HCT116 (cell line): ENCODE measurements at regions of chr6 and their contacts with region 1.

Region 1: GRCh38 chr6:25717866-25718740 is 36.4 kb upstream of the SLC17A4 start:
- DNase-seq: peak; percentile 6
- ATAC-seq: peak; percentile 48; the same call in 1 of the 2 replicates
- H3K4me3 ChIP-seq: no peak overlapping the region
- H3K27ac ChIP-seq: no peak overlapping the region
- H3K4me1 ChIP-seq: 0 out of 4 replicates have a peak, but pooled peaks cover 0 to 5% of the 10 kb centered on the region in 2 experiments
- H3K27me3 ChIP-seq: no peaks in the 10 kb centered on the region
- CTCF ChIP-seq: peak; percentile 47 to 67 (median 53); a peak in 5 of 6 replicates
- POLR2A ChIP-seq: no peak
- RAD21 ChIP-seq: peak; percentile 64

Region 2: GRCh38 chr6:24743265-24743943 is 974.7 kb before region 1 on chr6:
- CTCF ChIA-PET with region 1: no interaction called
- POLR2A ChIA-PET with region 1: no interaction called
- RAD21 ChIA-PET with region 1: no interaction called
- intact Hi-C with region 1: no loop called
- DNase-seq: peak; percentile 76
- ATAC-seq: peak; percentile 88
- H3K4me3 ChIP-seq: peak overlapping the region; percentile 6 to 36; a peak in 3 of 4 replicates
- H3K27ac ChIP-seq: peak overlapping the region; percentile 59
- H3K4me1 ChIP-seq: peaks cover 3 to 22% of the 10 kb centered on the region in 2 experiments; a peak in 3 of 4 replicates
- H3K27me3 ChIP-seq: no peaks in the 10 kb centered on the region
- CTCF ChIP-seq: no peak
- POLR2A ChIP-seq: no peak
- RAD21 ChIP-seq: no peak

Region 3: DNA sequence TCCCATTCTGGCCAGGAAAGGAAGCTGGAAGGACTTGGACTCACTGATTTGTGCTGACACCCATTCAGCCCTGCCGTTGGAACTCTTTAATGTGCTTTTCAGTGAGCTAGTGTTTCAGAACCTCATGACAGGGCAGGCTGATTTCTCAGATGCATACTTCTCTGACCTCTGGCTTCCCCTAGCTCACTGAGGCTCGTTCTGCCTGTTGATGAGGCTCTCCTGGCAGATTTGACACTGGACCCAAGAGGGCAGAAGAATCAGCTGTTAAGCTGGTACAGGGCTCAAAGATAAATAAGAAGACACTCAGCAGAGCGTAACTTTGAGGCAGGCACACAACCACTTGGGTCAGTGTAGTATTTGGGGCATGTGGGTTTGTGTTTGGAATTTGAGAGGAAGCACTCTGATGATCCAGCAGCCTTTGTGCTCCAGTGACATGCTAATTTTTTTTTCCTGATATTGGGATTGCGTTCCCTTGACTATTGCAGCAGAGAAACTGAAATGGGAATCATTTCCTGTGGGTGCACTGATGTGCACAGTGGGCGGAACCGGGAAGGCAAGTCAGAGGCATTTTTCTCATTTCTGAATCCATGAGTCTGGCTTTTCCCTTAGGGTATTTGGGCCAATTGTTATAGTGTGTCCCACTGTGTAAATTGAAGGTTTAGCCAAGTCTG is 358.8 kb before region 1 on chr6:
- CTCF ChIA-PET with region 1: no interaction called
- POLR2A ChIA-PET with region 1: no interaction called
- RAD21 ChIA-PET with region 1: no interaction called
- intact Hi-C with region 1: no loop called
- DNase-seq: no peak
- ATAC-seq: peak; percentile 42; the same call in 1 of the 2 replicates
- H3K4me3 ChIP-seq: no peak overlapping the region
- H3K27ac ChIP-seq: no peak overlapping the region; the same call in 1 of the 2 replicates
- H3K4me1 ChIP-seq: peaks cover 15 to 21% of the 10 kb centered on the region in 2 experiments; a peak in 3 of 4 replicates
- H3K27me3 ChIP-seq: no peaks in the 10 kb centered on the region
- CTCF ChIP-seq: no peak
- POLR2A ChIP-seq: no peak
- RAD21 ChIP-seq: no peak

Region 4: DNA sequence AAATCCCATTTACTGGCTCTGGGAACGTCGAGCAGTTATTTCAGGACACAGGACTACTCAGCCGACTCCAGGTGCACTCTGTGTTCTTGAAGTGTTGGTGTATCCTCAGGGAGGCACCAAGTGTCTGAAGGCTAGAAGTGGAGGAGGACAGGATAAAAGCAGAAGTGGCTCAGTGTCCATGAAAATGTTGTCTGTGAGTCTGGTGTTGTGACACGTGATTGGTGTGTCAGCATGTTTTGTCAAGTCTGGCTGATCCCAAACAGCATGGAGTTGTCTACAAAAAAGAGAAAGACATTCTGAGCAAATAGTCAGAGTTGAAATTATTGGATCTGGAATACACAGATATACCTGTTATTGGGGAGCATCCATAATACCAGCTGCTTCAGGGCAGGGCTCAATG is 35.8 kb before region 1 on chr6:
- CTCF ChIA-PET with region 1: no interaction called
- POLR2A ChIA-PET with region 1: no interaction called
- RAD21 ChIA-PET with region 1: no interaction called
- intact Hi-C with region 1: no loop called
- DNase-seq: no peak
- ATAC-seq: no peak
- H3K4me3 ChIP-seq: no peak overlapping the region
- H3K27ac ChIP-seq: no peak overlapping the region
- H3K4me1 ChIP-seq: no peaks in the 10 kb centered on the region
- H3K27me3 ChIP-seq: no peaks in the 10 kb centered on the region
- CTCF ChIP-seq: no peak
- POLR2A ChIP-seq: no peak
- RAD21 ChIP-seq: no peak

Region 5: DNA sequence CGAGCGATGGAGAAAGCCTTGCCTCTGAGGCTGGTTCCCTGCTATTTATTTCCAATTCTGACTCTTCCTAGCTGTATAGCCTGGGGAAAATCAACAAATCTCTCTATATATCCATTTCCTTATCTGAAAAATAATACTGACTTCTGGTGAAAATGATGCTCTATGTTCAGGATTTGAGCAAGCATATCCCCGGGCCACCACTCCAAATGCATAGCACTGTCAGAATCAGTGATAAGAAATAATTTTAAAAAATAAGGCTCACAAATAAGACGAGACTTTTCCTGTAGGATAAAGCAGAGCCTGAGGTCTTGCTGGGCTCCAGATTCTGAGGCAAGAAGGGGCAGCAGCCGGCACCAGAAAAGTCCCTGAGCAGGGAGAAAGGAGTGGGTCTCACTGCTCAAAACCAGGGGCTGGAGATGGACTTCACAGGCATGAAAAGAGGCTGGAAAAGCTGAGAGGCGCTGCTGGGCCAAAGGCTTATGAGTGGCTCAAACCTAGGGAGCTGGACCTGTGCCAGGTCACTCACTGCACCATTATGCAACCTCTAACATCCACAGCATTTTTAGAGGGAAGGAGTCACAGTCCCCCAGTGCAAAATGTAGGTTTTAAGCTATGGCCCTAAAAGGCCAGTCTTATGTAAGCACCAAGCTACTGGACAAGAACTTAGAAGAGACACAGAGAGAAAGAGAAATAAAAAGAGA is 11.6 kb before region 1 on chr6:
- CTCF ChIA-PET with region 1: interaction called, 14 read pairs
- POLR2A ChIA-PET with region 1: interaction called, 3 read pairs
- RAD21 ChIA-PET with region 1: no interaction called
- intact Hi-C with region 1: no loop called
- DNase-seq: no peak
- ATAC-seq: no peak
- H3K4me3 ChIP-seq: no peak overlapping the region
- H3K27ac ChIP-seq: no peak overlapping the region
- H3K4me1 ChIP-seq: no peaks in the 10 kb centered on the region
- H3K27me3 ChIP-seq: no peaks in the 10 kb centered on the region
- CTCF ChIP-seq: no peak
- POLR2A ChIP-seq: no peak
- RAD21 ChIP-seq: no peak

Region 6: DNA sequence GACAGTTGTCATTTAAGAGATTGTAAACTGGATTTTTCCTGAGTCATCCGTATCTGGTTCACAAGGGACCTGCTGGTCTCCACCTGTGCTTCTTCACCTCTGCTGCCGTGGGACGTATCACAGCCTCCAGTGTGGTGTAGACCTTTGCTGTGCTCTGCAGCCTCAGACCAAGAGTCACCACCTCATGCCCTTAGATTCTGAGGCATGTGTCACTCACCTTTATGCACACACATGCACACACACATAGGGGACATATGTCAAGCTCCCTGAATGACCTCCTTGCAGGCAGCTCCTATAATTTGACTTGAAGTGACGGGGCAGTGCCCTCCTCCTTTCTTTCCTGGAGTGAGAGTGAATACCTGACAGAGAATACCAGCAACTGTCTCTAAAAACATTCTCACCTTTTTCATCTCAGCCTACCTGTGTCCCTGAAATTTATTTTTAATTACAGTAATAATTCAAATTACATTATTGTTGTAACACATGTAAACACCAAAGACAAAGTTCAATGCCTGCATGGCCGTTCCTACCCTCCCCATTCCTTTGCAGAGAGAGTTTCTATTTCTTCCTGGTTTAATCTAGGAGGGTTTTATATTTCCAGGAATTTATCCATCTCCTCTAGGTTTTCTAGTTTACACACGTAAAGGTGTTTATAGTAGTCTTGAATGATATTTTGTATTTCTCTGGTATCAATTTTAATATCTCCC is 40.0 kb after region 1 on chr6:
- CTCF ChIA-PET with region 1: interaction called, 14 read pairs
- POLR2A ChIA-PET with region 1: no interaction called
- RAD21 ChIA-PET with region 1: no interaction called
- intact Hi-C with region 1: no loop called
- DNase-seq: no peak
- ATAC-seq: no peak
- H3K4me3 ChIP-seq: no peak overlapping the region
- H3K27ac ChIP-seq: no peak overlapping the region
- H3K4me1 ChIP-seq: no peaks in the 10 kb centered on the region
- H3K27me3 ChIP-seq: no peaks in the 10 kb centered on the region
- CTCF ChIP-seq: no peak
- POLR2A ChIP-seq: no peak
- RAD21 ChIP-seq: no peak

Region 7: GRCh38 chr6:25942561-25943147 is 224.6 kb after region 1 on chr6:
- CTCF ChIA-PET with region 1: interaction called, 8 read pairs
- POLR2A ChIA-PET with region 1: no interaction called
- RAD21 ChIA-PET with region 1: no interaction called
- intact Hi-C with region 1: loop called (anchors 2 kb)
- DNase-seq: peak; percentile 48
- ATAC-seq: peak; percentile 84
- H3K4me3 ChIP-seq: no peak overlapping the region
- H3K27ac ChIP-seq: no peak overlapping the region
- H3K4me1 ChIP-seq: no peaks in the 10 kb centered on the region
- H3K27me3 ChIP-seq: no peaks in the 10 kb centered on the region
- CTCF ChIP-seq: peak; percentile 42 to 73 (median 60); a peak in 4 of 6 replicates
- POLR2A ChIP-seq: no peak
- RAD21 ChIP-seq: peak; percentile 88